Caco-2 (cell line): ENCODE measurements at regions of chr2 and their contacts with region 1.

Region 1: GRCh38 chr2:55693181-55694134 is at the start of gene PNPT1:
- DNase-seq: peak; percentile 94 to 96
- H3K4me3 ChIP-seq: peak within 1 kb of the TSS; percentile 78
- H3K4me3 Mint-ChIP-seq: peak within 1 kb of the TSS; percentile 84
- H3K27ac Mint-ChIP-seq: peak within 1 kb of the TSS; percentile 82
- H3K4me1 ChIP-seq: peaks cover 32% of the 10 kb centered on the region
- H3K4me1 Mint-ChIP-seq: peaks cover 29% of the 10 kb centered on the region
- H3K27me3 ChIP-seq: no peaks in the 10 kb centered on the region
- H3K27me3 Mint-ChIP-seq: no peaks in the 10 kb centered on the region
- CTCF ChIP-seq: no peak
- total RNA-seq, gene PNPT1: 85.2 and 93.7 TPM in 2 replicates

Region 2: GRCh38 chr2:55223958-55224760 is 469.3 kb before region 1 on chr2:
- CTCF ChIA-PET with region 1: no interaction called
- POLR2A ChIA-PET with region 1: no interaction called
- intact Hi-C with region 1: no loop called
- DNase-seq: no peak
- H3K4me3 ChIP-seq: no peak overlapping the region
- H3K4me3 Mint-ChIP-seq: peak overlapping the region; percentile 52
- H3K27ac Mint-ChIP-seq: no peak overlapping the region
- H3K4me1 ChIP-seq: peaks cover 9% of the 10 kb centered on the region; the same call in 1 of the 2 replicates
- H3K4me1 Mint-ChIP-seq: peaks cover 12% of the 10 kb centered on the region
- H3K27me3 ChIP-seq: no peaks in the 10 kb centered on the region
- H3K27me3 Mint-ChIP-seq: no peaks in the 10 kb centered on the region
- CTCF ChIP-seq: no peak

Region 3: GRCh38 chr2:55581435-55581834 is 112.0 kb before region 1 on chr2:
- CTCF ChIA-PET with region 1: no interaction called
- POLR2A ChIA-PET with region 1: no interaction called
- intact Hi-C with region 1: no loop called
- DNase-seq: peak in 1 of 2 experiments; percentile 27
- H3K4me3 ChIP-seq: no peak overlapping the region
- H3K4me3 Mint-ChIP-seq: no peak overlapping the region
- H3K27ac Mint-ChIP-seq: no peak overlapping the region
- H3K4me1 ChIP-seq: no peaks in the 10 kb centered on the region
- H3K4me1 Mint-ChIP-seq: no peaks in the 10 kb centered on the region
- H3K27me3 ChIP-seq: no peaks in the 10 kb centered on the region
- H3K27me3 Mint-ChIP-seq: no peaks in the 10 kb centered on the region
- CTCF ChIP-seq: peak; percentile 22 to 39

Region 4: GRCh38 chr2:55672630-55673029 is 20.8 kb before region 1 on chr2:
- CTCF ChIA-PET with region 1: interaction called, 11 read pairs
- POLR2A ChIA-PET with region 1: no interaction called
- intact Hi-C with region 1: no loop called
- DNase-seq: no peak
- H3K4me3 ChIP-seq: no peak overlapping the region
- H3K4me3 Mint-ChIP-seq: no peak overlapping the region
- H3K27ac Mint-ChIP-seq: no peak overlapping the region
- H3K4me1 ChIP-seq: no peaks in the 10 kb centered on the region
- H3K4me1 Mint-ChIP-seq: no peaks in the 10 kb centered on the region
- H3K27me3 ChIP-seq: no peaks in the 10 kb centered on the region
- H3K27me3 Mint-ChIP-seq: no peaks in the 10 kb centered on the region
- CTCF ChIP-seq: no peak

Region 5: GRCh38 chr2:55712477-55713060 is 19.1 kb after region 1 on chr2:
- CTCF ChIA-PET with region 1: interaction called, 6 read pairs
- POLR2A ChIA-PET with region 1: no interaction called
- intact Hi-C with region 1: loop called (anchors 1 kb)
- DNase-seq: peak; percentile 93 to 96
- H3K4me3 ChIP-seq: no peak overlapping the region
- H3K4me3 Mint-ChIP-seq: peak overlapping the region; percentile 45
- H3K27ac Mint-ChIP-seq: peak overlapping the region; percentile 86
- H3K4me1 ChIP-seq: peaks cover 51% of the 10 kb centered on the region
- H3K4me1 Mint-ChIP-seq: peaks cover 55% of the 10 kb centered on the region
- H3K27me3 ChIP-seq: no peaks in the 10 kb centered on the region
- H3K27me3 Mint-ChIP-seq: no peaks in the 10 kb centered on the region
- CTCF ChIP-seq: no peak

Region 6: DNA sequence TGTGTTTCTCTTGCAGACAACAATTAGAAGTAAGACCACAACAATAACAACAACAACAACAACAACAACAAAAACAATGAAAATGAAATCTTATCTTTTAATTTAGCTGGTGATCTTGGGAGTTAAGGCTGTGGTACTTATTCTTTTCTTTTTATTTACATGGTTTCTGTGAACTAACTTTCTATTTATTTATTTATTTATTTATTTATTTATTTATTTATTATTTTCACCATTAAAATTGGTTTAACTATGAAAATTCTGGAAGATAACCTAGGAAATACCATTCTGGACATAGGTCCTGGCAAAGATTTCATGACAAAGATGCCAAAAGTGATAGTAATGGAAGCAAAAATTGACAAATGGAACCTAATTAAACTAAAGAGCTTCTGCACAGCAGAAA is 102.7 kb after region 1 on chr2:
- CTCF ChIA-PET with region 1: no interaction called
- POLR2A ChIA-PET with region 1: no interaction called
- intact Hi-C with region 1: no loop called
- DNase-seq: no peak
- H3K4me3 ChIP-seq: no peak overlapping the region
- H3K4me3 Mint-ChIP-seq: no peak overlapping the region
- H3K27ac Mint-ChIP-seq: no peak overlapping the region
- H3K4me1 ChIP-seq: no peaks in the 10 kb centered on the region
- H3K4me1 Mint-ChIP-seq: no peaks in the 10 kb centered on the region
- H3K27me3 ChIP-seq: no peaks in the 10 kb centered on the region
- H3K27me3 Mint-ChIP-seq: no peaks in the 10 kb centered on the region
- CTCF ChIP-seq: no peak